ENCODE measurements at regions of chr2 and their contacts with region 1.

Region 1: DNA sequence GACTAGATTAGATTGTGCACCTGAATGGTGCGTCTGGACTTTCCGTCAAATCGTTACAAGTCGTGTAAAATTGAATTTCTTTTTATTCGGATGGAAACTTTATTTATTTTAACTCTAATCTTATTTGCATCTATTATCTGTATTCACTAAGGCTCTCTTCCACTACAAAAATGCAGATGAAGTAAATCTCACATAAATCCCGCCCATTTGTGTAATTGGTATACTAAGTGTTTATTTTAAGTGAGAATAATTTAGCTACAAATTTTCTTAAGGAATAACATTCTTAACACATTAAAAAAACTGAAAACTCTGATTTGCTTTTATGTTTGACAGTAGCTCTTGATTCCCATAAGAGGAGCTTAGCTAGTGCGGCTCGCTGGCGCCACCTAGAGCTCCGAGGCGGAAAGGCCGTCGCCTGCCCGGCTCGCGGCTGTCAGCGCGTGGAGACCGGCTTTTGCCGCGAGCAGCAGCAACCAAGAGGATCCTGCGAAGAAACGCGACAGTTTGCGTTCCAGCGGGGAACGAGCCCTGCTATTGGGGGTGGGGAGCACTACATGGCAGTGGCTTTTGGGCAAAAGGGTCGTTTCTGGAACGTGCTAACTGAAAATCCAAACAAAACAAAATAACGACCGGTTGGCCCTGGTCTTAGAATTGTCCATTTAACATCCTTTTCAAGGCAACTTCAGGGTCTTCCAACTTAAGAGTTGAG is 6.7 kb downstream of the SP9 start:
- DNase-seq: peak; percentile 94
- ATAC-seq: peak; percentile 72
- H3K4me3 Mint-ChIP-seq: peak overlapping the region; percentile 52
- H3K27ac Mint-ChIP-seq: peak overlapping the region; percentile 42
- H3K4me1 Mint-ChIP-seq: peaks cover 39% of the 10 kb centered on the region
- H3K27me3 Mint-ChIP-seq: peaks cover 59% of the 10 kb centered on the region

Region 2: DNA sequence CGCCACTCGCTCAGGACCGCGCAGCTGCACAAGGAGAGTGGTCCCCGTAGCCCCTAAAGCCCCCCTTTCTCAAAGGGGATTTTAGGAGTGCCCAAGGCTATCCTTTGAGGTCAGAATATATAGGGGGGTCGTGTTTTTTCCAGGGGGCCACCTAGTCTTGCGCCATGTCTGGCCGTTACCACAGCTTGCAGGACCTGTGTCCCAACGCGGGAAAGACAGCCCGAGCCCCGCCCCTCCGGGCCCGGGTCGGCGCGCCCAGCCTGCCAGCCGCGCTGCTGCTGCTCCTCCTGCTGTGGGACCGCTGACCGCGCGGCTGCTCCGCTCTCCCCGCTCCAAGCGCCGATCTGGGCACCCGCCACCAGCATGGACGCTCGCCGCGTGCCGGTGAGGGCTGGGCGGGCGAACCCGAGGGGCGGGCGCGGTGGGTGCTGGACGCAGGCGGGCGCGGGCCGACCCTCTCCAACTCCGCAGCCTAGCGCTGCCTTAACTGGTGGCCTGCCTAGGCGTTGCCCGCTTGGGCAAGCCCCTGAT is 986.8 kb before region 1 on chr2 and contains the start of gene CDCA7:
- CTCF ChIA-PET with region 1: no interaction called
- POLR2A ChIA-PET with region 1: no interaction called
- intact Hi-C with region 1: loop called in 1 of 2 experiments (anchors 2 kb)
- DNase-seq: peak; percentile 86
- ATAC-seq: peak; percentile 68
- H3K4me3 Mint-ChIP-seq: peak within 1 kb of the TSS; percentile 87
- H3K27ac Mint-ChIP-seq: peak within 1 kb of the TSS; percentile 97
- H3K4me1 Mint-ChIP-seq: peaks cover 37% of the 10 kb centered on the region
- H3K27me3 Mint-ChIP-seq: peaks cover 46% of the 10 kb centered on the region
- total RNA-seq, gene CDCA7: 80.4 to 88.2 TPM

Region 3: GRCh38 chr2:173571021-173571882 is 770.2 kb before region 1 on chr2:
- CTCF ChIA-PET with region 1: no interaction called
- POLR2A ChIA-PET with region 1: no interaction called
- intact Hi-C with region 1: loop called (anchors 2 to 10 kb)
- DNase-seq: no peak
- ATAC-seq: no peak
- H3K4me3 Mint-ChIP-seq: no peak overlapping the region
- H3K27ac Mint-ChIP-seq: no peak overlapping the region
- H3K4me1 Mint-ChIP-seq: peaks cover 4% of the 10 kb centered on the region
- H3K27me3 Mint-ChIP-seq: peaks cover 4% of the 10 kb centered on the region

Region 4: DNA sequence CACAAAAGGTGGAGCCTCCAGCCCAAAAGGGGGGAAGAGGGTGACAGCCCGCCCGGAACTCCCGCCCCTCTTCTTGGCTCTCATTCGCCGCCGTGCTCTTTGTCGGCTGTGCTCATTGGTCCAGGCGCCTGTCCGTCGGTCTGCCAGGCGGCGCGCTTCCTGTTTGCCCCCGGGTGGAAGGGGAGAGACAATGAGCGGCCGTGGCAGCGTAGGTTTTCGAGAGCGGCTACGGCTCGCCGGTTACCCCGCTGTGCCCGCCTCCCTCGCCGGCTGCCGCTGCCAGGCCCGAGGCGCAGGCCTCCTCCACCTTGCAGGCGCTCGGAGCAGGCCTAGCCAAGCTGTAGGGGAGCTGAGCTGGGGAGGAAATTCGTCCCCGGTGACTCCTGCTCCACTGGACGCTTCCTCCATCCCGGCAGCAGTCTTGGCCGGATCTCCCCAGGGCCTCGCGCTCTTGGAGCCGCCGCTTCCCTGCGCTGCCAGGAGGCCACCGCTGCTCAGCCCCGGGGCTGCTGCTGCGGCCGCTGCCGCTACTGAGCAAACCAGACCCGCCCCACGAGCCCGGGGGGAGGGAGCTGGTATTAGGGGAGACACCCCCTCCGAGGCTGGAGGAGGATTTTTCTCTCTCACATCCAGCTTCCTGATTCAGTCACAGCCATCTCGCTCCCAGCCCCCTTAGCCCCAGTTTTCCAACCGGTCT is 376.0 kb before region 1 on chr2 and contains the start of gene SP3:
- CTCF ChIA-PET with region 1: no interaction called
- POLR2A ChIA-PET with region 1: interaction called, 6 read pairs
- intact Hi-C with region 1: loop called (anchors 2 to 10 kb)
- DNase-seq: peak; percentile 98
- ATAC-seq: peak; percentile 80
- H3K4me3 Mint-ChIP-seq: peak within 1 kb of the TSS; percentile 79
- H3K27ac Mint-ChIP-seq: peak within 1 kb of the TSS; percentile 100
- H3K4me1 Mint-ChIP-seq: peaks cover 27% of the 10 kb centered on the region
- H3K27me3 Mint-ChIP-seq: no peaks in the 10 kb centered on the region
- total RNA-seq, gene SP3: 83.8 to 91.4 TPM

Region 5: DNA sequence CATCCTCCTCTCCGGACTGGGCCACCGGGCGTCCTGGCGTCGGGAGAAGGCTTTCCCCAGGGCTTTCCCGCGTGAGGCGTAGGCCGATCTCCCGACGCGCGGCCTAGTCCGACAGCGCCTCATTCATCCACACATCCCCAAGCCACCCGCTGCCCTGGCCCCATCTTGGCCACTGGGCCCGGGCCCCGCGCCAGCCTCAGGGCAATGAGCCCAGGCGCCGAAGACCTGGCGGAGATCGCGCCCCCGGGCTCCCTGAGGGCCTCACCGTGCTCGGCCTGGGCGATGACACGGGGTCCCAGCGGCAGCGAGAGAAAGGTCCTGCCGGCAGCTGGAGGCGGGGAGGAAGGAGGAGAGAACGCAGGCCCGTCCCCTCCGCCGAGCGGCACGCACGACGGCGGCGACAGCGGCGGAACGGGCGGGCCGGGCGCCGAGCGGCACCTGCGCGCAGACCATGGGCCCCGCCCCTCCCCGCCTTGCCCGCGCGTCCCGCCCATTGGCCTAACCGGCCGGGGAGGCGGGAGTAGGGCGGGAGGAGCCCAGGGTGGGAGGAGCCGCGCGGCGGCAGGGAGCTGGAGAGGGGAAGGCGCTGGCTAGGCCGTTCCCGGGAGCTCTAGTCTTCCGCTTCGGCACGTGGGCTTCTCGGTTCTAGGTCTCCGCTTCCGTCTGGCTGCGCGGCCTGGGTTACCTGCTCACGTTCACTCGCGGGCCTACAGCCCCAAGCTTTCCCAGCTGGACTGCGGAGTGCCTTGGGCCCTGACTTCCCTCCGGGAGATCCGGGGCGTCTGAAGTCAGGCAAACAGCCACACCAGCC is 93.0 kb before region 1 on chr2 and contains the start of gene OLA1:
- CTCF ChIA-PET with region 1: interaction called, 4 read pairs
- POLR2A ChIA-PET with region 1: no interaction called
- intact Hi-C with region 1: loop called (anchors 1 to 5 kb)
- DNase-seq: peak; percentile 98
- ATAC-seq: peak; percentile 97
- H3K4me3 Mint-ChIP-seq: peak within 1 kb of the TSS; percentile 90
- H3K27ac Mint-ChIP-seq: peak within 1 kb of the TSS; percentile 85
- H3K4me1 Mint-ChIP-seq: peaks cover 31% of the 10 kb centered on the region
- H3K27me3 Mint-ChIP-seq: no peaks in the 10 kb centered on the region
- total RNA-seq, gene OLA1: 136 to 157 TPM

Region 6: GRCh38 chr2:176126929-176127773 is 1785.7 kb after region 1 on chr2:
- CTCF ChIA-PET with region 1: no interaction called
- POLR2A ChIA-PET with region 1: no interaction called
- intact Hi-C with region 1: loop called in 1 of 2 experiments (anchors 10 kb)
- DNase-seq: peak; percentile 81
- ATAC-seq: no peak
- H3K4me3 Mint-ChIP-seq: no peak overlapping the region
- H3K27ac Mint-ChIP-seq: no peak overlapping the region
- H3K4me1 Mint-ChIP-seq: peaks cover 31% of the 10 kb centered on the region
- H3K27me3 Mint-ChIP-seq: peaks cover 67% of the 10 kb centered on the region

Measured in activated CD4-positive, alpha-beta T cell treated with anti-CD3 and anti-CD28 coated beads for 36 hours (primary cell).